ENCODE measurements at regions of chr4 and their contacts with region 1.

Region 1: GRCh38 chr4:106690487-106690886 is 321.9 kb upstream of the GIMD1 start:
- DNase-seq: no peak
- ATAC-seq: no peak
- H3K4me3 ChIP-seq: no peak overlapping the region
- H3K27ac ChIP-seq: no peak overlapping the region
- H3K4me1 ChIP-seq: no peaks in the 10 kb centered on the region
- H3K27me3 ChIP-seq: no peaks in the 10 kb centered on the region
- CTCF ChIP-seq: no peak
- POLR2A ChIP-seq: no peak
- RAD21 ChIP-seq: no peak

Region 2: DNA sequence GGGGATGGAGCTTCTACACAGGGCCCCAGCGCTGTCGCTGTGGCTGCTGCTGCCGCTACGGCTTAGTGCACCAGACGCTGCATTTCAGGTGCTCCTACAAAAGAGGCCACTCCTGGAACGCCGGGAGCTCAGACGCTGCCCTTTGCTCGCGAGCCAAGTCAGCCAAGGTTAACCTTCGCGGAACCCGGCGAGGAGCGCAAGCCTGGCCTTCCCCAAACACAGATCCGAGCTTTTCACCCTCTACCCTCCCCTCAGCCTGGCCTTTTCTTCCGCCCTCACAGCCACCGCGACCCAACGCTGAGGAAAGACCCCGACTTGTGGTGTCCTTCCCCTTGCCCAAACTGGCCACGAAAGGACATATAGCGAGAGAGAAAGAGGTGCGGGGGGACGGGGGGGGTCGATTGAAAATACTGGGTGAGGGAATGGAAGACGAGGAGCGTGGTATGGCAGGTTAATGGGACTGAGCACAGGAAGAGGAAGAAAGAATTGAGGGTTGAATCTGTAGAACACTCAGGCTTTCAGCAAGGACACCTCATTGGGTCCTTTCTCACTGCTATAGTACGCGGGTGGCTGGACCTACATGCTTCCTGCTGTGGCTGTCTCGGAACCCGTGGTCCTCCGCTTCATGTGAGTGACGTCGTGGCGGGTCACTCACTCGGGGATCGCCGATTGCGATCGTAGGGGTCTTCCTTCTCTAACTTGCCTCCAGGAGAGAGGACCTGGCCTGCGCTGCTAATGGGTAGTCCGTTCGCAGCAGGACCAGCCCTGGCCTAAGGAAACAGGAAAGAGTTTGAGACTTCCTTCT is 374.3 kb before region 1 on chr4 and contains the starts of genes AIMP1 and TBCK:
- CTCF ChIA-PET with region 1: no interaction called
- POLR2A ChIA-PET with region 1: no interaction called
- RAD21 ChIA-PET with region 1: no interaction called
- intact Hi-C with region 1: no loop called
- DNase-seq: peak; percentile 88
- ATAC-seq: peak; percentile 89
- H3K4me3 ChIP-seq: peak within 1 kb of the TSS; percentile 84 to 88
- H3K27ac ChIP-seq: peak within 1 kb of the TSS; percentile 74
- H3K4me1 ChIP-seq: peaks cover 5 to 13% of the 10 kb centered on the region in 2 experiments; a peak in 3 of 4 replicates
- H3K27me3 ChIP-seq: no peaks in the 10 kb centered on the region
- CTCF ChIP-seq: no peak
- POLR2A ChIP-seq: peak; percentile 71
- RAD21 ChIP-seq: no peak; the same call in 1 of the 2 replicates
- total RNA-seq, gene AIMP1: 67.4 TPM
- total RNA-seq, gene TBCK: 22.3 TPM

Region 3: GRCh38 chr4:106329041-106329618 is 361.4 kb before region 1 on chr4:
- CTCF ChIA-PET with region 1: no interaction called
- POLR2A ChIA-PET with region 1: no interaction called
- RAD21 ChIA-PET with region 1: no interaction called
- intact Hi-C with region 1: no loop called
- DNase-seq: peak; percentile 28
- ATAC-seq: peak; percentile 70
- H3K4me3 ChIP-seq: no peak overlapping the region
- H3K27ac ChIP-seq: no peak overlapping the region
- H3K4me1 ChIP-seq: no peaks in the 10 kb centered on the region
- H3K27me3 ChIP-seq: no peaks in the 10 kb centered on the region
- CTCF ChIP-seq: peak; percentile 12 to 73 (median 71); a peak in 5 of 6 replicates
- POLR2A ChIP-seq: no peak
- RAD21 ChIP-seq: peak; percentile 39

Region 4: DNA sequence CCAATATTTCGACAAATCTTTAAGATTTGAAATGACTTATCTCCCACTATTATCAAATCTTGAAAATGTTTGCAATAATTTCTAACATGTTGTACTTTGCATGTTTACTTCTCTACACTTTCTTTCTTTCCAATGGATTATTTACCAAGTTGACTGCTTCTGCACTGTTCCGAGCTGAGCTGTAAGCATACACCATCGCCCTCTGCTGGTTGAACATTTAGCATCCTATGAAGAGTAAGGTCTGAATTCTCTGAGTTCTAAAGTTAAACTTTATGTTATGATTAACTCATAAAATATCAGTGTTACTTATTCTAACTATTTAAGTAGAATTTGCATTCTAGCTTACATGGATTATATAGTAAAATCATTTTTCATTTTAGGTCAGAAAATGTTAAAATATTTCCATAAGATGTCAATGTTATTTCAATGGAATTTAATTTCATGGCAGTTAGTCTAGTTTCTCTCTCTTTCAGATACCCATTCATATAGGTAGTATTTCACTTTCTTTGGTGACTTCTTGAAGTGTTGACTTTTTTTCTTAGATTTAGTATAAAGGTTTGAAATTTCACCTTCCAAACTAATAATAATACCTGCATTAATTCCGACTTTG is 208.2 kb after region 1 on chr4:
- CTCF ChIA-PET with region 1: no interaction called
- POLR2A ChIA-PET with region 1: no interaction called
- RAD21 ChIA-PET with region 1: no interaction called
- intact Hi-C with region 1: loop called (anchors 5 kb)
- DNase-seq: peak; percentile 51
- ATAC-seq: peak; percentile 93
- H3K4me3 ChIP-seq: no peak overlapping the region
- H3K27ac ChIP-seq: no peak overlapping the region
- H3K4me1 ChIP-seq: no peaks in the 10 kb centered on the region
- H3K27me3 ChIP-seq: no peaks in the 10 kb centered on the region
- CTCF ChIP-seq: peak; percentile 51 to 89 (median 74)
- POLR2A ChIP-seq: no peak
- RAD21 ChIP-seq: peak; percentile 72

Region 5: DNA sequence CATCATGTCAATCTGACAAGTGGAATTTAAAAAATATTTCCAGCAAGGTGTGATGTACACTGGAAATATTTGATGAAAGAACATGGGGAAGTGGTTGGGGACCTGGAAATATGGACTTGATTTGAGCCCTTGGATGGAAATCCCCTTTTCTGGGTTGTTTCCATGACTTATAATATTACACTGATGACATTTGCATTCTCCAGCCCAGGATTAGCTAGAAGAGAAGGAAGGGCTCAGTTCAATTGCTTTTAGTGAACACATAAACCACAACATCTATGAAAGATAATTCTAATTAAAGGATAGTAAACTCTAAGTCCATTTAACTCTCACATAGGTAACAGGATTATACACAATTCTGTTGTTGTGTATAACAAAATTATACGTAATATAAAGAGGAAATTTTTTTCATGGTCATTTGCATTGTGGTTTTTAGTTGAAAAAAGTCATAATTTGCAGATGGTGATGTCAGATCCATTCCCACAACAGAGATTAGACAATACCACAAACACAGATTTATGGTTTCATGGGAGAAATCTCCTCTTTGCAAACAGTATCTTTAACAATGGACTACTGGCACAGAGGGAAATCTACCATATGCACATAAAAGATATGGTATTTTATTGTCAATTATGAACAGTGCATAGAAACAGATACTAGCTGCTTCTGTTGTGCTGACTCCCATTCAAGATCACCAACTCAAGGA is 219.2 kb after region 1 on chr4:
- CTCF ChIA-PET with region 1: no interaction called
- POLR2A ChIA-PET with region 1: no interaction called
- RAD21 ChIA-PET with region 1: no interaction called
- intact Hi-C with region 1: no loop called
- DNase-seq: no peak
- ATAC-seq: no peak
- H3K4me3 ChIP-seq: no peak overlapping the region
- H3K27ac ChIP-seq: no peak overlapping the region
- H3K4me1 ChIP-seq: no peaks in the 10 kb centered on the region
- H3K27me3 ChIP-seq: no peaks in the 10 kb centered on the region
- CTCF ChIP-seq: no peak
- POLR2A ChIP-seq: no peak
- RAD21 ChIP-seq: no peak

Measured in HCT116 (cell line).